ENCODE measurements at regions of chr3 and their contacts with region 1.

Region 1: DNA sequence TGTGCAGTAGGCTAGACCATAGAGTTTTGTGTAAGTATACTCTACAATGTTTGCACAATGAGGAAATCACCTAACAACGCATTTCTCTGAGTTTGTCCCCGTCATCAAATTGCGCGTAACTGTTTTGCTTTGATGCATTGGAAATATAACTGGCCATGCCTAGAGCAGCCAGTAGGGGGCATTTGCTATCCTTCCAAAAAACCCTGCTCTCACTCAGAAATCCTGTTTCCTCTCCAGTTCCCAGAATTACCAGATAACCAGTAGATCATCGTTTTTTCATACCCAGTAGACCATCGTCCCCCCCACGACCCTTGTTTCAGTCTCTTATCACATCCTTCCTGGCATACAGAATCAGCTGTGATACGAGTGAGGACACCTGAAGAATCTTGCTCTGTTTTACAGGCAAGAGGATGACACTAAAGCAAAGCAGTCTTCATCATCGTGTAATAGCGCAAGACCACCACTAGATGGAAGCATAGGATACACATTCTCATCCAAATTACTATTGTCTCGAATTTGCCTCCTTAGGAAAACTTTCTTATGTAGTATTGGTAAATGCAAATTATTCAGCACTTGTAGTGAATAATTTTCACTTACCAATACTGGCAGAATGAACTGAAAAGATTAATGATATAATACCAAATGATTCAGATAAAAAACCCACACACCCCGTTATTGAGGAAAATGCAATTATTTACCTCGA is 4.4 kb upstream of the GABRR3 start:
- DNase-seq: peak; percentile 65
- H3K4me3 Mint-ChIP-seq: peak overlapping the region; percentile 71
- H3K27ac Mint-ChIP-seq: no peak overlapping the region
- H3K4me1 Mint-ChIP-seq: no peaks in the 10 kb centered on the region
- H3K27me3 Mint-ChIP-seq: peaks cover 9% of the 10 kb centered on the region
- CTCF ChIP-seq: peak; percentile 69

Region 2: DNA sequence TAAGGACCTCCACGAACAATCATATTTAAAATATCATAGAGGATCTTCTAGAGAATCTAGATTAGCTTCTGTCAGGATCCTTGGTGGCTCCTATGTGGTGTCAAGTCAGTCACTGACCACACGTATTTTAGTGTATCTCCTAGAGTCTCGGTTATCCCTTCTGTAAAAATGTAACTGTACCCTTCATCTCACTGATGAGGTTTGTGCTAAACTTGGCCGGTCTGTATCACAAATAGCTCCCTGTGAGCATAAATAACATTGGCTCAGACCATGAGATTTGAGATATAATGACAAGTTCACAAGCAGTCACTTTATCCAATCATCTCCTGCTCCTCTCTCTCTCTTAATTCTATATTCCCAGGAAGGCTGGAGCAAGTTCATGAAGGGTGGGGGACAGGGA is 368.5 kb before region 1 on chr3:
- CTCF ChIA-PET with region 1: no interaction called
- intact Hi-C with region 1: no loop called
- DNase-seq: no peak
- H3K4me3 Mint-ChIP-seq: no peak overlapping the region
- H3K27ac Mint-ChIP-seq: no peak overlapping the region
- H3K4me1 Mint-ChIP-seq: no peaks in the 10 kb centered on the region
- H3K27me3 Mint-ChIP-seq: no peaks in the 10 kb centered on the region
- CTCF ChIP-seq: no peak

Region 3: GRCh38 chr3:98329392-98330124 is 290.1 kb after region 1 on chr3:
- CTCF ChIA-PET with region 1: interaction called, 4 read pairs
- intact Hi-C with region 1: loop called (anchors 1 kb)
- DNase-seq: peak; percentile 46
- H3K4me3 Mint-ChIP-seq: no peak overlapping the region
- H3K27ac Mint-ChIP-seq: no peak overlapping the region
- H3K4me1 Mint-ChIP-seq: peaks cover 12% of the 10 kb centered on the region
- H3K27me3 Mint-ChIP-seq: peaks cover 45% of the 10 kb centered on the region
- CTCF ChIP-seq: peak; percentile 47

Measured in Calu3 (cell line).